ENCODE measurements at regions of chr2 and their contacts with region 1.

Region 1: GRCh38 chr2:143705108-143705686 is 576.0 kb downstream of the ARHGAP15 start:
- DNase-seq: no peak
- H3K4me3 Mint-ChIP-seq: no peak overlapping the region
- H3K27ac Mint-ChIP-seq: no peak overlapping the region
- H3K4me1 Mint-ChIP-seq: peaks cover 30% of the 10 kb centered on the region
- H3K27me3 Mint-ChIP-seq: no peaks in the 10 kb centered on the region

Region 2: GRCh38 chr2:143083636-143084035 is 621.6 kb before region 1 on chr2:
- CTCF ChIA-PET with region 1: no interaction called
- intact Hi-C with region 1: loop called (anchors 5 kb)
- DNase-seq: peak; percentile 15
- H3K4me3 Mint-ChIP-seq: no peak overlapping the region
- H3K27ac Mint-ChIP-seq: no peak overlapping the region
- H3K4me1 Mint-ChIP-seq: peaks cover 27% of the 10 kb centered on the region
- H3K27me3 Mint-ChIP-seq: no peaks in the 10 kb centered on the region

Region 3: DNA sequence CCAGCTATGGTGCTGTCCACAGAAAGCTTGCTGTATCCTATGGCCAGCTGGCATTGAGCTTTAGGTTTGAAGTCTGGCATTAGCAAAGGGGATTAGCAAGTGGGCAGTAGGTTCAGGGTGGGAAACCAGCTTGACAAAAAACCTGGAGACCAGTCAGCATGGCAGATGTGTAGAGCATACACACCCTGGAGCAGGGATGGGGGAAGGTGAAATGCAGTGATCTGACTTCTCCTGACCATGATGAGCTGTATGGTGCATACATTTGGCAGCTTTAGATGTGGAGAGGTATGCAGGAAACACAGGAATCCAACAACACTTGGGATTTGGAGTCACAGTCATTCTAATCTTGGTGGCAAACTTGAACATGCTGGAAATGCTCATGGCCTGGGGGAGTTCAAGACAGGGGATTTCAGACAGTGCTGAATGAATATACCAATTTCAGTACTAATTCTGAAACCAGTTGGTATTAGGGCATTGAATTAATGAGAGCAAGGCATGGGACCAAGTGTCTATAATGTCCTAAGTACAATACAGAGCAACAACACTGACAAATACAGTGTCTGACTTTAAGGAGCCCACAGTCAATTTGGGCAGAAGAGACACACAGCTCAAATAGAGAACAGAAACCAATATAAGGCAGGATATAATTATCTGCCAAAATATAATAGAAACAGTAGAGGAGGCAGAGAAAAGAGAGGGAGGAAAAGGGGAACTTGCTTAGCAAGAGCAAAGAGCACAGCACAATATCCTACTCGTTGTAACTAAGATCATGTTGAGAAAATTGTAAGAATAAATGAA is 564.1 kb before region 1 on chr2:
- CTCF ChIA-PET with region 1: no interaction called
- intact Hi-C with region 1: loop called (anchors 10 kb)
- DNase-seq: peak; percentile 44
- H3K4me3 Mint-ChIP-seq: peak overlapping the region; percentile 48
- H3K27ac Mint-ChIP-seq: peak overlapping the region; percentile 78
- H3K4me1 Mint-ChIP-seq: peaks cover 86% of the 10 kb centered on the region
- H3K27me3 Mint-ChIP-seq: no peaks in the 10 kb centered on the region

Region 4: DNA sequence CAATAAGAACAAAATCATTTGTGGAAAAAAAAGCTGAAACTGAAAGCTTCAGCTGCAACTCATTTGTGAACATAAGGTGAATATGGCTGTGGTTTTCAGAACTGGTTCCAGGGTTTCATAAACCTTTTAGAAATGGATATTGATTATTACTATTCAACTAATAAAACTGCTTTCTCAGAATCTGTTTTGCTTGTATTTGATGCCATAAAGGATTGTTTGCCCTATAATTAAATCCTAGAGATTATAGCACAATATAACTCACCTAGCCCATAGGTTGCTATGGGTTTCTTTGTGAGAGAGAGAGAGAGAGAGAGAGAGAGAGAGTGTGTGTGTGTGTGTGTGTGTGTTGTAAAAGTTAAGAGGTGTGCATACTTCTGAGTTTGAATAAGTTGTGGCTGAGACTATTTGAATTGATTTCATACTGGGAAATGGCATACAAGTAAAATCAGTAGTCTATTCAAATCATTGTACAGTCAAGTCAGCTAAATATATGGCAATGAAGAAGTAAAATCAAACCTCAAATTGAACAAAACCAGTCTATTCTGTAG is 236.8 kb before region 1 on chr2:
- CTCF ChIA-PET with region 1: interaction called, 3 read pairs
- intact Hi-C with region 1: loop called (anchors 1 kb)
- DNase-seq: no peak
- H3K4me3 Mint-ChIP-seq: peak overlapping the region; percentile 12
- H3K27ac Mint-ChIP-seq: peak overlapping the region; percentile 50
- H3K4me1 Mint-ChIP-seq: peaks cover 28% of the 10 kb centered on the region
- H3K27me3 Mint-ChIP-seq: no peaks in the 10 kb centered on the region

Region 5: DNA sequence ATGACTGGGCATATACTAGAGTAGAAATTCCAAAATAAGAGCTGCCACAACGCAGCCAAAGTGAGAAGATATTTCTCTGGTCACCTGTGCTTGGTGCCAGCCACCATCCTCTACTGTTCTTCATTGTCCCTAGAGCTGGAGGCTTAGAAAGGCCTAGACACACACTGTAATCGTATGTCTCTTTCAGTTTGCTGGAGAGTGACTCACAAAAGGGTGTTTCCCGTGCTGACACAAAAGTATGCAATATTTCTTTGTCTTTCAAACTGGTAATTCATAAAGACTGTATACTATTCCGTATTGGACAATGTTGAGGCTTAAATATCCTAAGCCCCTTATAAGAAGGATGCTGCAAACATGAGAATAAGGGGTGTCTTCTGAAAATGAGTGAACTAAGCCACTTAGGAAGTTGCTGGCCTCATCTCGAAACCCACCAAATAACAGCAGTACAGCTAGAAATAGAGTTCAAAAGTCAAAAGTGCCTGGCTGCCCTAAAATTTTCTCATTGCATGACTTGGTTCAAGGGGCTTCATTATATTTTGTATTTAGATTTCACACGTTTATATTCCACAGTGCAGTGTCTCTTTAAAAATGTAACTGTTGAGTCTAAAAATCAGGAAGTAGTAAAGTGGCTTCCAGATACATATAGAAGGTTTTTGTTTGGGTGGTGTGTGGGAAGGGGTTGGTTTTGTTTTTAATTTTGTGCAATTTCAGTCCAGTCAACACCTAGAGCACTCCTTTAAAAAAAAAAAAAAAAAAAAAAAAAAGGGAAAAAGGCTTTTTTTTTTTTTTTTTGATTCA is 25.2 kb after region 1 on chr2:
- CTCF ChIA-PET with region 1: interaction called, 4 read pairs
- intact Hi-C with region 1: loop called (anchors 1 kb)
- DNase-seq: peak; percentile 44
- H3K4me3 Mint-ChIP-seq: no peak overlapping the region
- H3K27ac Mint-ChIP-seq: peak overlapping the region; percentile 61
- H3K4me1 Mint-ChIP-seq: peaks cover 32% of the 10 kb centered on the region
- H3K27me3 Mint-ChIP-seq: no peaks in the 10 kb centered on the region

Region 6: DNA sequence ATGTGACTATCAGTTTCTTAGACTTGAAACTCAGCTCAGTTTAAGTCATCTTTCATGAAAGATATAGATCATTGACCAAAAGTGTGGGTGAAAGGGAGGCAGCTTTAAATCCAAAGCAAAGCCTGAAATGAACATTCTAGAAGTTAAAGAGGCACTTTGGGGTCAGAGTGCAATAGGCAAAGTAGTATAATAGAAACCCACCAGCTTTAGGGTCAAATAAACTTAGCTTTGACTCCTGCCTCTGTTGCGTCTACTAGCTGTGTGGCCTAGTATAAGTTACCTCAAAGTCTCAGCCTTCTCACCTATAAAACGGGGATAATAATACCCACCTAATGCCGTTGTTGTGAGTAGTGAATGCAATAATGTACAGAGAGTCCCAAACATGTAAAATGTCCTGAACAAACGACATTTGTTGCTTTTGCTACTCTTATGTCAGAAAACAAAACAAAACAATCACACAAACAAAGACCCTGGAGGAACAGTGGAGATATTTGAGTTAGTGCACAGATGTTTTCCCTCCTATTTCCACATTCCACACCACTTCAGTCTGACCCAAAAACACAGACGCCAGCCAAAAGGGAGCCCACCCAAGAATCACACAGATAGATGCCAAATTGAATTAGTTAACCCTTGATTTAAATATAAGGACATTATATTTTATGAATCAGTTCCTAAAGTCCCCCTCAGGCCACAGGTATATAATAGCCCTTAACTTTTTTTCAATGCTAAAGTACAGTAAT is 81.0 kb after region 1 on chr2:
- CTCF ChIA-PET with region 1: no interaction called
- intact Hi-C with region 1: no loop called
- DNase-seq: no peak
- H3K4me3 Mint-ChIP-seq: no peak overlapping the region
- H3K27ac Mint-ChIP-seq: no peak overlapping the region
- H3K4me1 Mint-ChIP-seq: no peaks in the 10 kb centered on the region
- H3K27me3 Mint-ChIP-seq: peaks cover 19% of the 10 kb centered on the region

Region 7: GRCh38 chr2:143877876-143878530 is 172.8 kb after region 1 on chr2:
- CTCF ChIA-PET with region 1: no interaction called
- intact Hi-C with region 1: loop called (anchors 5 kb)
- DNase-seq: no peak
- H3K4me3 Mint-ChIP-seq: no peak overlapping the region
- H3K27ac Mint-ChIP-seq: no peak overlapping the region
- H3K4me1 Mint-ChIP-seq: peaks cover 21% of the 10 kb centered on the region
- H3K27me3 Mint-ChIP-seq: peaks cover 3% of the 10 kb centered on the region

Measured in activated naive CD4-positive, alpha-beta T cell treated with anti-CD3 and anti-CD28 coated beads for 36 hours (primary cell).